Activated B cell treated with CpG ODN at 0.5 μM for 24 hours (primary cell): ENCODE measurements at regions of chr21 and their contacts with region 1.

Region 1: DNA sequence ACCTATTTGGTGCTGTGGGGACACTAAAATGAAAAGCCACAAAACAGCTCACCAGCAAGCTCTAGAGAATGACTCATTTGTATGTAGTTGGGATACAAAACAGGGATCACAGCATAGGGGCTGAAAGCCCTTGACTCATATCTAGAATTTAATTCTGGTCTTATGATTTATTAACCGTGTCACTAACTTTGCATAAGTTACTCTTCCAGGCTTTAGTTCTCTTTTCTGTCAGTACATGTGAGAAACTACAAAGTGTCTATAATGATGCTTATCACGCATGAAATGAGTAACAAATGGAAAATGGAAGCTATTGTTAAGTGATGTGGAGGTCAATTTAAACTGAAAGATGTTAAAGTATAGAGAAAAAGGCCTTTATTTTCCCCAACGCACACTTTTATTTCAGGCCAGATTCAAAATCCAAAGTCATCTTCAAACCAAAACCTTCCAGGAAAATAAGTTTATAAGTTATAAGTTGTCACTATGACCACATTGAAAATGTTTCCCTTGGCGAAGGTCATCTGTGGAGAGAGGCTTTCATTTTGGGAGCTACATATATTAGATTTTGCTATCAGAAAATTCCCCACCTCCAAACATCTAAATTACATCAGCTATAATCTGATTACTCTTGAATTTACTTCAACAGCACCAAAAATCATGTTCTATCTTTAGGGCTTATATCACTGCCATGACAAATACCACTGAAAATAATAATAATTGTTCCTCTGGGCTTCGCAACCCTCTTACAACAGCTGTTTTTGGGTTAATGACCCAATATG is 430.5 kb downstream of the MRPL39 start:
- DNase-seq: no peak
- ATAC-seq: peak; percentile 85
- H3K4me3 Mint-ChIP-seq: peak overlapping the region; percentile 0
- H3K27ac Mint-ChIP-seq: peak overlapping the region; percentile 91
- H3K4me1 Mint-ChIP-seq: peaks cover 70% of the 10 kb centered on the region
- H3K27me3 Mint-ChIP-seq: no peaks in the 10 kb centered on the region
- CTCF ChIP-seq: no peak

Region 2: DNA sequence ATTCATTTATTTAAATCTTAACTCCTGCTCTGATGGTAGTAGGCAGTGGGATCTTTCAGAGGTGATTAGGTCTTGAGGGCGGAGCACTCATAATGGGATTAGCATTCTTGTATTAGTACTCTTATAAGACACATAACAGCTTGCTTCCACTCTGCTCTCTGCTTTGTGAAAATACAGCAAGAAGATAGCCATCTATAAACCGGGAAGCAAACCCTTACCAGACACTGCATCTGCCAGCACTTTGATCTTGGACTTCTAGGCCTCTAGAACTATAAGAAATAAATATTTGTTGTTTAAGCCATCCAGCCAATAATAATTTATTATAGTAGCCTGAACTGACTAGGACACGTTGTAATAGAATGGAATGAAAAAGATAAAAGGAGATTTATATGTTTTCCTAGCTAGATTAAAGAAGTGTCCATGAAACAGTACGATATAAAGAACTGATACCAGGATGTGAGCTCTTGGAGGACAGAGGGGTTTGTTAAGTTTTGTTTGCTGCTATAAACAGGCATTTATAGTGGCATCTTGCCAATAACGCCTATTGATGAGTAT is 439.5 kb before region 1 on chr21:
- CTCF ChIA-PET with region 1: no interaction called
- POLR2A ChIA-PET with region 1: no interaction called
- intact Hi-C with region 1: no loop called
- DNase-seq: no peak
- ATAC-seq: no peak
- H3K4me3 Mint-ChIP-seq: no peak overlapping the region
- H3K27ac Mint-ChIP-seq: no peak overlapping the region
- H3K4me1 Mint-ChIP-seq: no peaks in the 10 kb centered on the region
- H3K27me3 Mint-ChIP-seq: no peaks in the 10 kb centered on the region
- CTCF ChIP-seq: no peak

Region 3: DNA sequence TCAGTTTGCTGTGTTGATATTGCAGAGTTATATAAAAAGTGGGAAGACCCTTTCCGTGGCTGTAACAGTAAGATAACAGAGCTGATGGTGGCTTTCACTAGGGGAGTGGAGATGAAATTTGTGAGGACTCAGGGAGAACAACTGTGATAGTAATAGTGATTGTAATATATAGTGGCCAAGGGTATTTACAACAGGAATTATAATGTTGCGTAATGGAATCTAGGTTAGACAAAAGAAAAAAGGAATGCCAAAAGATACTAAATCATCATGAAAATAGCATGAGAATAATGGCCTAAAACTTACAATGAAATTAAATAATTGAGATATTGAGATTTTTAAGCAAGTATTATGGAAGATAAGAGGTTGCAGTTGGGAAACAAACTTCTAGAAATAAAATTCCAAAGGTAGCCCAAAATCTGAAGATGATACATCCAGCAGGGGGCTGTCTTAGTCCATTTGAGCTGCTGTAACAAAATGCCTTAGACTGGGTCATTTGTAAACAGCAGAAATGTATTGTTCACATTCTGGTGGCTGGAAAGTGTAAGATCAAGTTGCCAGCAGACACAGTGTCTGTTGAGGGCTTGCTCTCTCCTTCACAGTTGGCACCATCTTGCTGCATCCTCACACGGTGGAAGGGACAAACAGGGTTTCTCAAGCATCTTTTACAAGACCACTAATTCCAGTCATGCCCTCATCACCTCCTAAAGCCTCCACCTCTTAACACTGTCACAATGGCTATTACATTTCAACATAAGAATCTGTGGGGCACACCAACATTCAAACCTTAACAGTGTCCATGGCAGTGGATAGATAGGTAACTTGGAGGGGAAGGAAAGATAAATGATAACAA is 280.7 kb before region 1 on chr21:
- CTCF ChIA-PET with region 1: no interaction called
- POLR2A ChIA-PET with region 1: no interaction called
- intact Hi-C with region 1: loop called (anchors 1 kb)
- DNase-seq: no peak
- ATAC-seq: peak; percentile 69
- H3K4me3 Mint-ChIP-seq: no peak overlapping the region
- H3K27ac Mint-ChIP-seq: peak overlapping the region; percentile 4
- H3K4me1 Mint-ChIP-seq: peaks cover 21% of the 10 kb centered on the region
- H3K27me3 Mint-ChIP-seq: no peaks in the 10 kb centered on the region
- CTCF ChIP-seq: no peak

Region 4: GRCh38 chr21:25161571-25161970 is 15.3 kb before region 1 on chr21:
- CTCF ChIA-PET with region 1: no interaction called
- POLR2A ChIA-PET with region 1: interaction called, 3 read pairs
- intact Hi-C with region 1: loop called (anchors 1 kb)
- DNase-seq: no peak
- ATAC-seq: no peak
- H3K4me3 Mint-ChIP-seq: no peak overlapping the region
- H3K27ac Mint-ChIP-seq: peak overlapping the region; percentile 55
- H3K4me1 Mint-ChIP-seq: peaks cover 18% of the 10 kb centered on the region
- H3K27me3 Mint-ChIP-seq: no peaks in the 10 kb centered on the region
- CTCF ChIP-seq: no peak

Region 5: GRCh38 chr21:25215698-25216384 is 39.0 kb after region 1 on chr21:
- CTCF ChIA-PET with region 1: no interaction called
- POLR2A ChIA-PET with region 1: no interaction called
- intact Hi-C with region 1: loop called (anchors 1 kb)
- DNase-seq: no peak
- ATAC-seq: peak; percentile 90
- H3K4me3 Mint-ChIP-seq: peak overlapping the region; percentile 35
- H3K27ac Mint-ChIP-seq: peak overlapping the region; percentile 42
- H3K4me1 Mint-ChIP-seq: peaks cover 31% of the 10 kb centered on the region
- H3K27me3 Mint-ChIP-seq: no peaks in the 10 kb centered on the region
- CTCF ChIP-seq: no peak

Region 6: GRCh38 chr21:25457411-25457810 is 280.6 kb after region 1 on chr21:
- CTCF ChIA-PET with region 1: no interaction called
- POLR2A ChIA-PET with region 1: interaction called, 3 read pairs
- intact Hi-C with region 1: loop called (anchors 1 kb)
- DNase-seq: no peak
- ATAC-seq: peak; percentile 65
- H3K4me3 Mint-ChIP-seq: peak overlapping the region; percentile 65
- H3K27ac Mint-ChIP-seq: peak overlapping the region; percentile 87
- H3K4me1 Mint-ChIP-seq: peaks cover 66% of the 10 kb centered on the region
- H3K27me3 Mint-ChIP-seq: no peaks in the 10 kb centered on the region
- CTCF ChIP-seq: no peak

Region 7: GRCh38 chr21:25556091-25556490 is 379.3 kb after region 1 on chr21:
- CTCF ChIA-PET with region 1: no interaction called
- POLR2A ChIA-PET with region 1: no interaction called
- intact Hi-C with region 1: no loop called
- DNase-seq: no peak
- ATAC-seq: no peak
- H3K4me3 Mint-ChIP-seq: no peak overlapping the region
- H3K27ac Mint-ChIP-seq: no peak overlapping the region
- H3K4me1 Mint-ChIP-seq: peaks cover 18% of the 10 kb centered on the region
- H3K27me3 Mint-ChIP-seq: no peaks in the 10 kb centered on the region
- CTCF ChIP-seq: no peak